PC-9 (cell line): ENCODE measurements at regions of chr2 and their contacts with region 1.

Region 1: GRCh38 chr2:172226244-172227061 is 123.8 kb upstream of the DLX2 start:
- DNase-seq: peak; percentile 81 to 88
- H3K4me3 ChIP-seq: no peak overlapping the region
- H3K27ac ChIP-seq: no peak overlapping the region
- H3K4me1 ChIP-seq: peaks cover 60% of the 10 kb centered on the region
- H3K27me3 ChIP-seq: no peaks in the 10 kb centered on the region
- CTCF ChIP-seq: peak; percentile 82

Region 2: GRCh38 chr2:171541202-171541887 is 685.1 kb before region 1 on chr2:
- CTCF ChIA-PET with region 1: no interaction called
- POLR2A ChIA-PET with region 1: no interaction called
- intact Hi-C with region 1: loop called (anchors 5 kb)
- DNase-seq: peak in 1 of 2 experiments; percentile 47
- H3K4me3 ChIP-seq: no peak overlapping the region
- H3K27ac ChIP-seq: no peak overlapping the region
- H3K4me1 ChIP-seq: no peaks in the 10 kb centered on the region
- H3K27me3 ChIP-seq: no peaks in the 10 kb centered on the region
- CTCF ChIP-seq: peak; percentile 90

Region 3: DNA sequence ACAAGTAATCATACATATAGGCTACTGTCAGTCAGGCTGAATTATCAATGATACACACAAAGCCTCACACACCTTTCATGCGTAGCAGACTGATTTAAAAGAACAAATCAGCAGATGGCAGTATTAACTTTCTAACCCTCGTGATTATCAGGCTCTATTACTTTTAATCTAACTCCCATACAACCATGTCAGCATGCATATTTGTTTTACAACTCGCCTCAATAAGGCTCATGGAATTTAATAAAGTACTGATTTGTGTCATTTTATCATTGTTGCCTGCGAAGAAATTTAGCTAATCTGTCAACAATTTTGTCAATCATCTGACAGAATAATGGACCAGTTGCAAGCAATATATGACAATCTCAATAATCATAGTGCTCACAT is 415.2 kb before region 1 on chr2:
- CTCF ChIA-PET with region 1: no interaction called
- POLR2A ChIA-PET with region 1: no interaction called
- intact Hi-C with region 1: loop called (anchors 5 kb)
- DNase-seq: peak in 1 of 2 experiments; percentile 55
- H3K4me3 ChIP-seq: no peak overlapping the region
- H3K27ac ChIP-seq: no peak overlapping the region
- H3K4me1 ChIP-seq: peaks cover 19% of the 10 kb centered on the region
- H3K27me3 ChIP-seq: no peaks in the 10 kb centered on the region
- CTCF ChIP-seq: peak; percentile 70

Region 4: GRCh38 chr2:172120118-172120517 is 106.3 kb before region 1 on chr2:
- CTCF ChIA-PET with region 1: no interaction called
- POLR2A ChIA-PET with region 1: interaction called, 4 read pairs
- intact Hi-C with region 1: loop called (anchors 5 kb)
- DNase-seq: no peak
- H3K4me3 ChIP-seq: no peak overlapping the region
- H3K27ac ChIP-seq: peak overlapping the region; percentile 88
- H3K4me1 ChIP-seq: peaks cover 43% of the 10 kb centered on the region
- H3K27me3 ChIP-seq: no peaks in the 10 kb centered on the region
- CTCF ChIP-seq: no peak

Region 5: DNA sequence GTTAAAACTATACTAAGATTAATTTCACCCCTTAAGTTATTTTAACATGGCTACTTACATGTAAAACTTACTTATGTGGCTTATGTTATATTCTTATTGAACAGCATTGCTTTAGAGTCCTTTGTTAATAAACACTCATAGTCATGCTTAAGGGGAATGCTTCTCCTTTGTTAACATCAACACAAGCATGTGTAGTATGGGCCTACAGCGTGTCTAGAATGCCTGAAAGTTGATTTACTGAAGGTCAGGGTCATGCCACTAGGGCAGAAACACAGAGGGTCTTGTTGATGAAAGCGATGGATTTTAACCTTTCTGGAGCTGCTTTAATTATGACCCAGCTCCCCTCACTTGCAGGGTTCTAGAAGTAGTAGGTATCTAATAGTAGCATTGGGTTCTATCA is 36.0 kb after region 1 on chr2:
- CTCF ChIA-PET with region 1: no interaction called
- POLR2A ChIA-PET with region 1: no interaction called
- intact Hi-C with region 1: no loop called
- DNase-seq: no peak
- H3K4me3 ChIP-seq: no peak overlapping the region
- H3K27ac ChIP-seq: no peak overlapping the region
- H3K4me1 ChIP-seq: no peaks in the 10 kb centered on the region
- H3K27me3 ChIP-seq: no peaks in the 10 kb centered on the region
- CTCF ChIP-seq: no peak

Region 6: GRCh38 chr2:172442072-172442895 is 215.8 kb after region 1 on chr2:
- CTCF ChIA-PET with region 1: interaction called, 6 read pairs
- POLR2A ChIA-PET with region 1: interaction called, 10 read pairs
- intact Hi-C with region 1: loop called (anchors 1 kb)
- DNase-seq: peak; percentile 100
- H3K4me3 ChIP-seq: peak overlapping the region; percentile 5; the same call in 1 of the 2 replicates
- H3K27ac ChIP-seq: peak overlapping the region; percentile 81
- H3K4me1 ChIP-seq: peaks cover 80% of the 10 kb centered on the region
- H3K27me3 ChIP-seq: no peaks in the 10 kb centered on the region
- CTCF ChIP-seq: no peak

Region 7: GRCh38 chr2:172736424-172737174 is 510.1 kb after region 1 on chr2:
- CTCF ChIA-PET with region 1: no interaction called
- POLR2A ChIA-PET with region 1: no interaction called
- intact Hi-C with region 1: no loop called
- DNase-seq: no peak
- H3K4me3 ChIP-seq: no peak overlapping the region
- H3K27ac ChIP-seq: no peak overlapping the region
- H3K4me1 ChIP-seq: no peaks in the 10 kb centered on the region
- H3K27me3 ChIP-seq: 0 out of 2 replicates have a peak, but pooled peaks cover 2% of the 10 kb centered on the region
- CTCF ChIP-seq: no peak